Breast epithelium (tissue), 4 donors: ENCODE measurements at regions of chr7 and their contacts with region 1.

Region 1: DNA sequence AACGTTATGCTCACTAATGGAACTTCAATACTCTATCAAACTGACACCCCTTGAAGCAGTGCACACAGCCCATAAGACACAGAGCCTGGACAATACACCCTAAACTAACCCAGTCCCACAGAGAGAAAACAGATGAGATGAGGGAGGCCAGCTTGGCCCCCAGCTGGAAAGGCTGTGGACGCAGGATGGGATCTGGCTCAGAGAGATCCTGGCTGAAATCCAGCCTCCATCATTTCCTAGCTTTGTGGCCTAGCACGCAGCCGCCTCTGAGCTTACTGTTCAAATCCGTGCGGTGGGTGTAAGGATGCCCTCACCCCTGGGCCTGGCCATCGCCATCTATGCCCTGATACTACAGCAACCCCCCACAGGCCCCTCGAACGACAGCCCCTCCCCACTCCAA is 32.7 kb downstream of the SNX8 start:
- DNase-seq: no peak
- H3K4me3 ChIP-seq: no peak overlapping the region
- H3K27ac ChIP-seq: peak overlapping the region in 1 of 2 donors; percentile 79
- H3K4me1 ChIP-seq: no peaks in the 10 kb centered on the region
- H3K27me3 ChIP-seq: no peaks in the 10 kb centered on the region
- CTCF ChIP-seq: no peak
- POLR2A ChIP-seq: no peak

Region 2: GRCh38 chr7:2495418-2496299 is 214.1 kb after region 1 on chr7:
- intact Hi-C with region 1: no loop called
- DNase-seq: no peak
- H3K4me3 ChIP-seq: no peak overlapping the region
- H3K27ac ChIP-seq: no peak overlapping the region
- H3K4me1 ChIP-seq: peaks cover 0 to 4% of the 10 kb centered on the region in 2 donors
- H3K27me3 ChIP-seq: no peaks in the 10 kb centered on the region
- CTCF ChIP-seq: no peak
- POLR2A ChIP-seq: no peak

Region 3: GRCh38 chr7:4129481-4130122 is 1848.1 kb after region 1 on chr7:
- intact Hi-C with region 1: loop called (anchors 5 kb)
- DNase-seq: peak; percentile 55 to 70
- H3K4me3 ChIP-seq: peak overlapping the region in 2 of 3 donors; percentile 18 to 39
- H3K27ac ChIP-seq: peak overlapping the region in 1 of 2 donors; percentile 7
- H3K4me1 ChIP-seq: no peaks in the 10 kb centered on the region
- H3K27me3 ChIP-seq: no peaks in the 10 kb centered on the region
- CTCF ChIP-seq: no peak
- POLR2A ChIP-seq: no peak